ENCODE measurements at regions of chr15 and their contacts with region 1.

Region 1: GRCh38 chr15:99424978-99425656 is 140.7 kb upstream of the MEF2A start:
- DNase-seq: peak; percentile 80 to 82
- ATAC-seq: peak; percentile 60
- H3K4me3 ChIP-seq: no peak overlapping the region
- H3K27ac ChIP-seq: peak overlapping the region; percentile 17 to 72
- H3K4me1 ChIP-seq: no peaks in the 10 kb centered on the region
- H3K27me3 ChIP-seq: no peaks in the 10 kb centered on the region

Region 2: GRCh38 chr15:99452774-99453636 is 27.9 kb after region 1 on chr15:
- intact Hi-C with region 1: loop called in 1 of 2 experiments (anchors 1 kb)
- DNase-seq: peak; percentile 93 to 97
- ATAC-seq: peak; percentile 62
- H3K4me3 ChIP-seq: no peak overlapping the region
- H3K27ac ChIP-seq: peak overlapping the region; percentile 45 to 95
- H3K4me1 ChIP-seq: peaks cover 0 to 5% of the 10 kb centered on the region in 2 donors
- H3K27me3 ChIP-seq: no peaks in the 10 kb centered on the region

Measured in aorta (tissue), 5 donors.